ENCODE measurements at regions of chr9 and their contacts with region 1.

Region 1: DNA sequence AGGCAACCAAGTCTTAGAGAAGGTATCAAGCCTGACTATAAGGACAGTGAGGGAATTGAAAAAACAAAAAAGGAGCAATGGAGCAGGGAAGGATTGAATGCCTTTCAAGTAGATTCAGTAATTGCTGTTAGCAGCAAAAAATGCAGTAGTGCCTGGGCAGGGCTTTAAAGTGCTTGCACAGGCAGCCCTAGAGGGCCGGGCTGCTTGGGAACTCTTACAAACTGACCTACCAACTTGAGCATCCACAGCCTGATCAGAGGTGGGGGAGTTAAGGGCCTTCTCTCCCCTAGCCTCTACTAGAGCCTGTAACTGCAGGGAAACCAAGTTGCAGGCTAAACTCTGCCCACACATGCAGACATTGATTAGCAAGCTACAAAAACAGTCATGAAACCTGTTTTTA is 19.4 kb downstream of the FXN start:
- DNase-seq: no peak

Region 2: GRCh38 chr9:68981789-68982188 is 73.2 kb before region 1 on chr9:
- intact Hi-C with region 1: no loop called
- DNase-seq: no peak

Region 3: DNA sequence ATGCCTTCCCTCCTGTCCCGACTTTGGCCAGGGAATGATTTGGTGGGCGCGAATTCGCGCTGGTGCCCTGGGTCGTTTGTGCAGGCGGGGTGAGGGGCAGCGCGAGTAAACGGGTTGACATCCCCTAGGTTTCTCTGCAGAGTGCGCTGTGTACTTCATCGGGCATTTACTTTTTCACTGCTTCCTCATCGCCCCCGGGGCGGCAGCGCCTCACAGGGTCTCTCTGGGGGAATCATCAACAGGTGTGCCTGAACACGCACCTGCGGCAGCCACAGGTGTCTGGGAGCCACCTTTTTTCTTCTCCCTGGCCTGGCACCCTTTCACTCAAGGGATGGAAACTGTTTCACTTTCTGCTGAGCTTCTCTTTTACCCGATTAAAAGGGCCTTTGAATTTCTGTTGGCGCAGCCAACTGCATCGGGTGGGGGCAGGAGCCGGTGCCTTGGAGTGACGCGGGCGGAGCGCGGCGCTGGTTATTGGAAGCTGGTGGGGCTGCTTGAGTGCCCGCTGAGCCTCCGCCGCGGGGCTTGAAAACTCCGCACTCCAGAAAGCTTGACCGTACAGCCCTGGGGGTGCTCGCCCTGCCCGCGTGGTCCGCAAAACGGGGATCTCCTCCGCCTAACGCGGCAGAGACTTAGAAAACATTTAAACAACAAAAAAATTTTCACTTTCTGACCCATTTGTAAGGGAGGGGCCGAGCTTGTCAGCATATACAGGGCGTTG is 67.0 kb after region 1 on chr9:
- intact Hi-C with region 1: no loop called
- DNase-seq: peak; percentile 67 to 92 (median 84)

Region 4: GRCh38 chr9:69190086-69190862 is 135.3 kb after region 1 on chr9:
- intact Hi-C with region 1: loop called (anchors 5 kb)
- DNase-seq: no peak